Heart right ventricle (tissue), 16 donors: ENCODE measurements at regions of chr17 and their contacts with region 1.

Region 1: GRCh38 chr17:55348749-55349354 is 72.8 kb downstream of the MMD start:
- DNase-seq: peak; percentile 17 to 33
- ATAC-seq: peak in 7 of 8 donors; percentile 57 to 76 (median 67)
- H3K4me3 ChIP-seq: no peak overlapping the region
- H3K27ac ChIP-seq: no peak overlapping the region
- H3K4me1 ChIP-seq: peaks cover 0 to 7% (median 0%) of the 10 kb centered on the region in 9 donors
- H3K27me3 ChIP-seq: no peaks in the 10 kb centered on the region
- CTCF ChIP-seq: peak; percentile 61 to 93 (median 88)

Region 2: DNA sequence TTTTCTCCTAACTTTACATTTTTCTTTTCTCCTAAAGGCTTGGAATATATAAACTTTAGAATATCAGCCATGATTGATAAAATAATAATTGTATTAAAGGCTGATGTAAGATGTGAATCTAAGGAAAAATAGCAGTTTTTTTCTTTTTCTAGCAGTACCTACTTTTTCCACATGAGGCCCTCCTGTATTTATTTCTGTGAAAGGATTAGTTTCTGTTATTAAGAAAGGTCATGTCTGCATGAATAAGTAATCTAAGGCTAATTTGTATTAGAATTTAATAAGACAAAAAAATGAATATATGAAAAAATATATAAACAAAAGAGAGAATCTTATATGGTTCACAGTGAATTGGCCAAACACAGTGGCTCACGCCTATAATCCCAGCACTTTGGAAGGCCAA is 295.0 kb before region 1 on chr17:
- intact Hi-C with region 1: loop called in 3 of 10 experiments (anchors 5 to 10 kb)
- DNase-seq: no peak
- ATAC-seq: no peak
- H3K4me3 ChIP-seq: no peak overlapping the region
- H3K27ac ChIP-seq: no peak overlapping the region
- H3K4me1 ChIP-seq: no peaks in the 10 kb centered on the region
- H3K27me3 ChIP-seq: no peaks in the 10 kb centered on the region
- CTCF ChIP-seq: peak in 7 of 9 donors; percentile 35 to 54 (median 42)

Region 3: DNA sequence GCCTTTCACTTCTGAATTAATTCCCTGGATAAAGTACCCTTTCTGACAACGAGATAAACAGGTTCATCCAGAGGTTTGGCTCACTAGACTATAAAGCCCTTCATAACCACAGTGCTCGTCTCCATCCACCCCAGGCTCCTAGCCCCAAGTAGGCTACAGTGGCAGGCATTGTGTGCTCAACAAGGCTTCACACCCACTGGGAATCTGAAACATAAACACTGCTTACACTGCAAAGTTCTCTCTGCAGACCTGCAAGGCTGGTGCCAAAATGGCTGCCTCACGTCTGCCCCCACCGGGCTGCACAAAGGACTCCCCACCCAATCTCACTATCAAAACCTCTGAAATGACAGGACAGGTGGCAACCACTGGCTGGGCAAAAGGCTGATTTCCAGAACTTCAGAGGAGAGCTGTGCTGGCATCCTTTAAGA is 89.2 kb before region 1 on chr17:
- intact Hi-C with region 1: loop called in 1 of 10 experiments (anchors 10 kb)
- DNase-seq: no peak
- ATAC-seq: no peak
- H3K4me3 ChIP-seq: no peak overlapping the region
- H3K27ac ChIP-seq: no peak overlapping the region
- H3K4me1 ChIP-seq: peaks cover 4 to 14% (median 13%) of the 10 kb centered on the region in 9 donors
- H3K27me3 ChIP-seq: peaks cover 0 to 43% (median 11%) of the 10 kb centered on the region in 7 donors
- CTCF ChIP-seq: no peak